Activated CD8-positive, alpha-beta T cell treated with anti-CD3 and anti-CD28 coated beads, Interleukin-2, amount 10 ng/mL, durations not matched to agents 7 days and 5 days (primary cell): ENCODE measurements at regions of chr7 and their contacts with region 1.

Region 1: GRCh38 chr7:95476904-95477594 is 8.7 kb upstream of the ASB4 start:
- DNase-seq: peak; percentile 69
- ATAC-seq: no peak
- H3K4me3 Mint-ChIP-seq: no peak overlapping the region
- H3K27ac Mint-ChIP-seq: no peak overlapping the region
- H3K4me1 Mint-ChIP-seq: no peaks in the 10 kb centered on the region
- H3K27me3 Mint-ChIP-seq: peaks cover 5% of the 10 kb centered on the region

Region 2: GRCh38 chr7:95190515-95190914 is 286.5 kb before region 1 on chr7:
- CTCF ChIA-PET with region 1: interaction called, 12 read pairs
- POLR2A ChIA-PET with region 1: no interaction called
- DNase-seq: no peak
- ATAC-seq: no peak
- H3K4me3 Mint-ChIP-seq: no peak overlapping the region
- H3K27ac Mint-ChIP-seq: no peak overlapping the region
- H3K4me1 Mint-ChIP-seq: no peaks in the 10 kb centered on the region
- H3K27me3 Mint-ChIP-seq: no peaks in the 10 kb centered on the region

Region 3: GRCh38 chr7:95396136-95397032 is 80.7 kb before region 1 on chr7 and contains the start of gene PON3:
- CTCF ChIA-PET with region 1: interaction called, 18 read pairs
- POLR2A ChIA-PET with region 1: no interaction called
- DNase-seq: peak; percentile 38
- ATAC-seq: peak; percentile 98
- H3K4me3 Mint-ChIP-seq: peak within 1 kb of the TSS; percentile 57
- H3K27ac Mint-ChIP-seq: no peak within 1 kb of the TSS
- H3K4me1 Mint-ChIP-seq: peaks cover 6% of the 10 kb centered on the region
- H3K27me3 Mint-ChIP-seq: peaks cover 32% of the 10 kb centered on the region
- total RNA-seq, gene PON3: not detected

Region 4: DNA sequence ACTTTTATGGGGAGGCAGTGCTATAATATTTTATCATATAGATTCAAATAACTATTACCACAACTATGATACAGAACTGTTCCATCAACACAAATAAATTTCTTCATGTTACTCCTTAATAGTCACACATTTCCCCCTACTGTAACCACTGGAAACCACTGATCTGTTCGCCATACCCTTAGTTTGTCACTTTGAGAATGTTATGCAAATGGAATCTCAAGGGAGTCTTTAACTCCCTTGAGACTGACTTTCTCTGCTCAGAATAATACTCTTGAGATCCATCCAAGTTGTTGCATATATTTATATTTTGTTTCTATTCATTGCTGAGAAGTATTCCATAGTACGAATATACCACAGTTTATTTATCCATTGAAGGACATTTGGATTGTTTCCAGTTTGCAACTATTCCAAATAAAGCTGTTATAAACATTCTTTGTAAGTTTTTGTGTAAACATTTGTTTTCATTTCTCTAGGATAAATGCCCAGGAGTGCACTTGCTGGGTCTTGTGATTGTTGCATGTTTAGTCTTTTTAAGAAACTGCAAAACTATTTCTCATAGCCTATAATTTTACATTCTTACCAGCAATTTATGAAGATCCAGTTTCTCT is 22.5 kb before region 1 on chr7:
- CTCF ChIA-PET with region 1: no interaction called
- POLR2A ChIA-PET with region 1: no interaction called
- DNase-seq: no peak
- ATAC-seq: no peak
- H3K4me3 Mint-ChIP-seq: no peak overlapping the region
- H3K27ac Mint-ChIP-seq: no peak overlapping the region
- H3K4me1 Mint-ChIP-seq: no peaks in the 10 kb centered on the region
- H3K27me3 Mint-ChIP-seq: peaks cover 16% of the 10 kb centered on the region

Region 5: GRCh38 chr7:95501261-95501832 is 24.3 kb after region 1 on chr7:
- CTCF ChIA-PET with region 1: interaction called, 111 read pairs
- POLR2A ChIA-PET with region 1: no interaction called
- DNase-seq: peak; percentile 50
- ATAC-seq: peak; percentile 74
- H3K4me3 Mint-ChIP-seq: peak overlapping the region; percentile 2
- H3K27ac Mint-ChIP-seq: peak overlapping the region; percentile 84
- H3K4me1 Mint-ChIP-seq: peaks cover 33% of the 10 kb centered on the region
- H3K27me3 Mint-ChIP-seq: peaks cover 11% of the 10 kb centered on the region

Region 6: GRCh38 chr7:95608359-95609173 is 131.5 kb after region 1 on chr7:
- CTCF ChIA-PET with region 1: no interaction called
- POLR2A ChIA-PET with region 1: no interaction called
- DNase-seq: no peak
- ATAC-seq: no peak
- H3K4me3 Mint-ChIP-seq: no peak overlapping the region
- H3K27ac Mint-ChIP-seq: no peak overlapping the region
- H3K4me1 Mint-ChIP-seq: no peaks in the 10 kb centered on the region
- H3K27me3 Mint-ChIP-seq: peaks cover 2% of the 10 kb centered on the region

Region 7: DNA sequence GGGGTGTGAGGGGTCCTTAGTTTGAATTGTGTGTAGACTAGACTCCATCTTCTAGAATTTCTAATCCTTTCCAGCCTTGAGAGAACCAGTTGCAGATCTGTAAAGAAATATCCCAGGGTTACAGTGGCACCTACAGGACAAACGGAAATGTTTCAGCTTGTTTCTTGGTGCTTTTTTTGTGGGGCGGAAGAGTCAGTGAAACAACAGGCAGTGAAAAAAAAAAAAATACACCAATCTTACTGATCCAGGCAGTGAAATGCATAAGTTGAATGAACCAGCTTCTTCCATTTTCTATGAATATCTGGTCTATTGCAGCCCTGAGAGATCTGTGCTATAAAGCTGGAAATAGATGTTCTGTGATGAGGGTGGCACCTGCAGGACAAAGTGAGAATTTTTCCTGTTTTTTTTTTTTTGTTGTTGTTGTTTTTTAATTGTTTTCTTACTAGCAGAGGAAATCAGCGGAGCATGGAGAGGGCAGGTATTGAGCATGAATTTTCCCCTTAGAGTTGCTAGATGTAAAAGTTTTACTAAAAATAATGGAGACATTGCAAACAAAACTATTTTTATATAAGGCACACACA is 213.4 kb after region 1 on chr7:
- CTCF ChIA-PET with region 1: interaction called, 14 read pairs
- POLR2A ChIA-PET with region 1: no interaction called
- DNase-seq: peak; percentile 33
- ATAC-seq: peak; percentile 44
- H3K4me3 Mint-ChIP-seq: no peak overlapping the region
- H3K27ac Mint-ChIP-seq: no peak overlapping the region
- H3K4me1 Mint-ChIP-seq: peaks cover 2% of the 10 kb centered on the region
- H3K27me3 Mint-ChIP-seq: no peaks in the 10 kb centered on the region